ENCODE measurements at regions of chr6 and their contacts with region 1.

Region 1: DNA sequence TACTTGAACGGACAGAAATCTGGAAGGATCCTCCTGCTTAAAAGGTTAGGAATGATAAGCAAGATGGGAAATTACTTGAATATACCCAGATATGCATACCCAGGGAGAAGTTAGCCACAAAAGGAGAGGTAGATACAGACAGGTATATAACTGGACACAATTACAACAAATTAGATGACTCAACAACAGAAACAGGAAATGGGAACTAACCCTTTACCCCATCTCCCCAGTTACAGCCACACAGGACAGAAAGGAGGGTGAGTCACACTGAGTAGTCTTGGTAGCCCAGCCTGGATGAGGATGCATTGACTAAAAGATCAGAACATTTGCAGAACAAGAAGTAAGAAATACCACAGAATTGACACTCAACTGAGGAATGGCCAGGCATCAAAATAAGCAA is 61.2 kb downstream of the C6orf52 start:
- DNase-seq: no peak
- H3K4me3 ChIP-seq: no peak overlapping the region
- H3K27ac ChIP-seq: no peak overlapping the region
- H3K4me1 ChIP-seq: no peaks in the 10 kb centered on the region
- H3K27me3 ChIP-seq: no peaks in the 10 kb centered on the region
- CTCF ChIP-seq: no peak

Region 2: DNA sequence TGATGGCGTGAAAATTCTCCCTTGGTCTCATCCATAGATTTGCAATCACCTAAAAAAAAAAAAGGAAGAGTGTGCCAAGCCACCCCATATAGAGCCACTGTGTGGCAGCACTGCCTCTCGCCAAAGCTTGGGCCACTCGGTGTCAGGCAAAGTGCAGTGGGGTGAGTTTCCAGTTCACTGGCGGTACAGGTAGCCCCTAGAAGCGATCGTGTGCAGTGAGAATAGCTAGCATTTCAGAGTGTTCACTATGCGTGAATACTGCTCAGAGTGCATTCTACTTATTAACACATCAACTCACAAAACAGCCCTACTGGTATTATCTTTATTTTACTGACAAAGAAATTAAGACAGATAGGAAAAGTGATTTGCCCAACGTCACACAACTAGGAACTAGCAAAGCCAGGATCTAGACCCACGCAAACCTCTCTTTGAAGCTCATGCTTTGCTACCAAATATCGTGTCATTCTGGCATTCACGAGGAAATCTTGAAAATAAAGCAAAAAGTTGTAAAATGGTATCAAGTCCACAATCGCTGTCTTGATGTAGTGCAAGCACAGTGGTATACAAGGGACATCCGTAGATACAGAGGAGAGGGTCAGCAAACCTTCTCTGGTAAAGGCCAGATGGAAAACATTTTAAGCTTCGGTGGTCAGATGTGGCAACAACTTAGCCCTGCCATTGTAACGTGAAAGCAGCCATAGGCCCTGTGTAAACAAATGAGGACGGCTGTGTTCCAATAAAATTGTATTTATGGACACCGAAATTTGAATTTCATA is 122.4 kb before region 1 on chr6:
- intact Hi-C with region 1: loop called (anchors 10 kb)
- DNase-seq: peak in 1 of 2 donors; percentile 42
- H3K4me3 ChIP-seq: no peak overlapping the region
- H3K27ac ChIP-seq: no peak overlapping the region
- H3K4me1 ChIP-seq: no peaks in the 10 kb centered on the region
- H3K27me3 ChIP-seq: no peaks in the 10 kb centered on the region
- CTCF ChIP-seq: peak; percentile 12 to 31

Measured in tibial artery (tissue), 4 donors.